ENCODE measurements at regions of chr1 and their contacts with region 1.

Region 1: GRCh38 chr1:2194898-2195673 is 514 bp upstream of the FAAP20 start:
- DNase-seq: peak; percentile 93
- ATAC-seq: peak; percentile 67
- H3K4me3 Mint-ChIP-seq: peak overlapping the region; percentile 77
- H3K27ac Mint-ChIP-seq: peak overlapping the region; percentile 86
- H3K4me1 Mint-ChIP-seq: peaks cover 32% of the 10 kb centered on the region
- H3K27me3 Mint-ChIP-seq: no peaks in the 10 kb centered on the region

Region 2: DNA sequence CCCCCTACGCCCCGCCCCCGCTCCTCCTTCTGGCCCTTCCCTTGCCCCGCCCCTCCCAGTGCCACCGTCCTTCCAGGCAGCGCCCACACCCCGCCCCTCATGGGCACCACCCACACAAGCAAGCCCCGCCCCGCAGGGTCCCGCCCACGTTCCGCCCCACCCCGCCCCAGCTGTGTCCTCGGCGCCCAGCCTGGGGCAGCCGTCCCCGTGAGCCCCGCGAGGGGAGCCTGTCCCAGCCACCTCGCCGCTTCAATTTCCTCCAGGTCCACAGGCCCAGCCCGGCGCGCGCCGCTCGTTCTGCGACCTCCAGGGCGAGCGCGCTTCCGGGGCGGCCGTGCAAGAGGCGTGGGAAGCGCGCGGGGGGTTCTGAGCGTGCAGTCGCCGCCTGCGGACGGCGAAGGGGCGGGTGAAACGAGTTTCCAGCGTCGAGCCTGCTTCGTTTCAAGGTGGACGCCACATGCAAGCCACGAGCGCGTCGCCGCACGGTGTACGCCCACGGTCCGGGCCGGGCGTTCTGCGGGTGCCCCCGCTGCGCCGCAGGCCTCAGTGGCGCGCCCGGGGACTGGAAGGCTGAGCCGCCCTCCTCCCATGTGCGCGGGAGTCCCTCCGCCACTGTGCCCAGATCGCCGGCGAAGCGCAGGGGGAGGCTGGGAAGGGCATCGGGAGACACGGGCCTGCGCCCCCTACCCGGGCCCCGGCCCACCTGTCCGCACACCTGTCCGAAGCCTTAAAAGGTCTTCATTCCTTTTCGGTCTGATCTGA is 10.3 kb after region 1 on chr1:
- CTCF ChIA-PET with region 1: interaction called, 4 read pairs
- POLR2A ChIA-PET with region 1: interaction called, 3 read pairs
- intact Hi-C with region 1: loop called in 1 of 2 experiments (anchors 1 kb)
- DNase-seq: peak; percentile 98
- ATAC-seq: peak; percentile 88
- H3K4me3 Mint-ChIP-seq: peak overlapping the region; percentile 51
- H3K27ac Mint-ChIP-seq: no peak overlapping the region
- H3K4me1 Mint-ChIP-seq: peaks cover 3% of the 10 kb centered on the region
- H3K27me3 Mint-ChIP-seq: no peaks in the 10 kb centered on the region

Region 3: GRCh38 chr1:2215909-2216766 is 21.1 kb after region 1 on chr1:
- CTCF ChIA-PET with region 1: no interaction called
- POLR2A ChIA-PET with region 1: no interaction called
- intact Hi-C with region 1: no loop called
- DNase-seq: no peak
- ATAC-seq: no peak
- H3K4me3 Mint-ChIP-seq: no peak overlapping the region
- H3K27ac Mint-ChIP-seq: no peak overlapping the region
- H3K4me1 Mint-ChIP-seq: peaks cover 2% of the 10 kb centered on the region
- H3K27me3 Mint-ChIP-seq: no peaks in the 10 kb centered on the region

Region 4: DNA sequence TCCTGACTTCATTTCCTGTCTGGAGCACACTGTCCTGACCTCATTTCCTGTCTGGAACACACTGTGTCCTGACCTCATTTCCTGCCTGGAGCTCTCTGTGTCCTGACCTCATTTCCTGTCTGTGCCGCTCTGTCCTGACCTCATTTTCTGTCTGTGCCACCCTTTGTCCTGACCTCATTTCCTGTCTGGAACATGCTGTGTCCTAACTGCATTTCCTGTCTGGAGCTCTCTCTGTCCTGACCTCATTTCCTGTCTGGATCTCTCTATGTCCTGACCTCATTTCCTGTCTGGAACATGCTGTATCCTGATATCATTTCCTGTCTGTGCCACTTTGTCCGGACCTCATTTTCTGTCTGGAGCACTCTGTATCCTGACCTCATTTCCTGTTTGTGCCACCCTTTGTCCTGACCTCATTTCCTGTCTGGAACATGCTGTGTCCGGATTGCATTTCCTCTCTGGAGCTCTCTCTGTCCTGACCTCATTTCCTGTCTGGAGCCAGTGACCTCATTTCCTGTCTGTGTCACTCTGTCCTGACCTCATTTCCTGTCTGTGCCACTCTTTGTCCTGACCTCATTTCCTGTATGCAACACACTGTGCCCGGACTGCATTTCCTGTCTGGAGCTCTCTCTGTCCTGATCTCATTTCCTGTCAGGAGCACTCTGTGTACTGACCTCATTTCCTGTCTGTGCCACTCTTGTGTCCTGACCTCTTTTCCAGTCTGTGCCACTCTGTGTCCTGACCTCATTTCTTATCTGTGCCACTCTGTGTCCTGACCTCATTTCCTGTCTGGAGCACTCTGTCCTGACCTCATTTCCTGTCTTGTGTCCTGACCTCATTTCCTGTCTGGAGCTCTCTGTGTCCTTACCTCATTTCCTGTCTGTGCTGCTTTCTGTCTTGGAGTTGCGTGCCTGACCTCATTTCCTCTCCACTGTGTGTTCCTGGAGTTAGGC is 60.6 kb after region 1 on chr1:
- CTCF ChIA-PET with region 1: no interaction called
- POLR2A ChIA-PET with region 1: interaction called, 3 read pairs
- intact Hi-C with region 1: loop called in 1 of 2 experiments (anchors 2 kb)
- DNase-seq: peak; percentile 87
- ATAC-seq: peak; percentile 71
- H3K4me3 Mint-ChIP-seq: no peak overlapping the region
- H3K27ac Mint-ChIP-seq: no peak overlapping the region
- H3K4me1 Mint-ChIP-seq: peaks cover 54% of the 10 kb centered on the region
- H3K27me3 Mint-ChIP-seq: no peaks in the 10 kb centered on the region

Region 5: GRCh38 chr1:2300851-2301606 is 105.9 kb after region 1 on chr1:
- CTCF ChIA-PET with region 1: interaction called, 3 read pairs
- POLR2A ChIA-PET with region 1: interaction called, 3 read pairs
- intact Hi-C with region 1: loop called in 1 of 2 experiments (anchors 1 kb)
- DNase-seq: peak; percentile 95
- ATAC-seq: peak; percentile 81
- H3K4me3 Mint-ChIP-seq: peak overlapping the region; percentile 79
- H3K27ac Mint-ChIP-seq: peak overlapping the region; percentile 95
- H3K4me1 Mint-ChIP-seq: peaks cover 59% of the 10 kb centered on the region
- H3K27me3 Mint-ChIP-seq: no peaks in the 10 kb centered on the region

Region 6: GRCh38 chr1:2345223-2346080 is 150.4 kb after region 1 on chr1:
- CTCF ChIA-PET with region 1: no interaction called
- POLR2A ChIA-PET with region 1: no interaction called
- intact Hi-C with region 1: no loop called
- DNase-seq: no peak
- ATAC-seq: no peak
- H3K4me3 Mint-ChIP-seq: no peak overlapping the region
- H3K27ac Mint-ChIP-seq: no peak overlapping the region
- H3K4me1 Mint-ChIP-seq: no peaks in the 10 kb centered on the region
- H3K27me3 Mint-ChIP-seq: no peaks in the 10 kb centered on the region

Region 7: GRCh38 chr1:2381741-2382620 is 186.9 kb after region 1 on chr1:
- CTCF ChIA-PET with region 1: interaction called, 78 read pairs
- POLR2A ChIA-PET with region 1: no interaction called
- intact Hi-C with region 1: loop called (anchors 1 kb)
- DNase-seq: peak; percentile 90
- ATAC-seq: peak; percentile 97
- H3K4me3 Mint-ChIP-seq: no peak overlapping the region
- H3K27ac Mint-ChIP-seq: no peak overlapping the region
- H3K4me1 Mint-ChIP-seq: no peaks in the 10 kb centered on the region
- H3K27me3 Mint-ChIP-seq: no peaks in the 10 kb centered on the region